A549 (cell line): ENCODE measurements at regions of chr19 and their contacts with region 1.

Region 1: GRCh38 chr19:42166316-42166715 is 34.1 kb upstream of the POU2F2 start:
- DNase-seq: no peak
- ATAC-seq: no peak
- H3K4me3 ChIP-seq: no peak overlapping the region
- H3K27ac ChIP-seq: no peak overlapping the region
- H3K4me1 ChIP-seq: no peaks in the 10 kb centered on the region
- CTCF ChIP-seq: no peak
- EP300 ChIP-seq: no peak
- POLR2A ChIP-seq: no peak
- RAD21 ChIP-seq: no peak

Region 2: GRCh38 chr19:42140125-42140754 is 26.1 kb before region 1 on chr19:
- CTCF ChIA-PET with region 1: interaction called, 42 read pairs
- POLR2A ChIA-PET with region 1: no interaction called
- DNase-seq: peak in 1 of 2 experiments; percentile 53
- ATAC-seq: peak; percentile 72 to 81
- H3K4me3 ChIP-seq: no peak overlapping the region
- H3K27ac ChIP-seq: no peak overlapping the region
- H3K4me1 ChIP-seq: no peaks in the 10 kb centered on the region
- CTCF ChIP-seq: no peak
- EP300 ChIP-seq: no peak
- POLR2A ChIP-seq: no peak
- RAD21 ChIP-seq: 0 out of 5 replicates have a peak, but pooled peaks of 1 of the 2 experiments have one; percentile 9

Region 3: DNA sequence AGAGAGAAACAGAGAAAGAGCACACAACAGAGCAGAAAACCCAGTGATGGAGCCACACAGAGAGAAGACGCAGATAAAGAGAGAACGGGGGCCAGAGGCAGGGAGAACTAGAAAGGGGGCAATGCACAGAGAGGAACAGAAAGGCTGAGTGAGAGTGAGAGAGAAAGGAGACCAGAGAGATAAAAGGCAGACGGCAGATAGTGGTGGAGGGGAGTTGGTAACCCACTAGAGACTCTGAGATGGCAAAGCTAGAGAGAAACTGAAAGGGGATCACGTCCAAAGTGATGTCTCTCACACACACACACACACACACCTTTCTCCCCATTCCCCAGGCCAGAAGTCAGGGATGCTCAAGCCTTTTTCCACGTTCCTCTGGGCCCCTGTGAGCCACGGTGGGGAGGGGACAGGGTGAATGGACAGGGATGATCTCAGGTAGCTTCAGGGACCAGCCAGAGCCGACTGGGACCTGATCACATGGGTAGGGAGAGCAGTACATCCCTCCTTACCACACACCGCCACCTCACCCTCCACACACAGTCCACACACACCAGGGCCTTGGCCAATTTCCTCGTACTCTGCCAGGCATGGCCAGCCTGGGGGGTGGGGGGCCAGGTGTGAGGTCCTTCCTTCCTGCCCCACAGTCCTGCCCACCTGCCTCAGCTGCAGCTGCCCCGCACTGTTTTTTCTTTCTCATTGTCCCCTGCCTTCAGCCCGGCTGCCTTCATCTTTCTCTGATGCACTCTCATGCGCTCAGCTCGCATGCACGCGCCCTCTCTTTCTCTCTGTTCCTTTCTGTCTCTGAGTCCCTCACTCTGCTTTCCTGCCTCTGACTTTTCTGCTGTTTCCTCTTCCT is 11.6 kb before region 1 on chr19:
- CTCF ChIA-PET with region 1: interaction called, 42 read pairs
- POLR2A ChIA-PET with region 1: no interaction called
- DNase-seq: no peak
- ATAC-seq: peak; percentile 28 to 57; a peak in 3 of 6 replicates
- H3K4me3 ChIP-seq: no peak overlapping the region
- H3K27ac ChIP-seq: no peak overlapping the region
- H3K4me1 ChIP-seq: no peaks in the 10 kb centered on the region
- CTCF ChIP-seq: no peak
- EP300 ChIP-seq: no peak
- POLR2A ChIP-seq: no peak
- RAD21 ChIP-seq: no peak